Adrenal gland (tissue), 19 donors: ENCODE measurements at regions of chr10 and their contacts with region 1.

Region 1: DNA sequence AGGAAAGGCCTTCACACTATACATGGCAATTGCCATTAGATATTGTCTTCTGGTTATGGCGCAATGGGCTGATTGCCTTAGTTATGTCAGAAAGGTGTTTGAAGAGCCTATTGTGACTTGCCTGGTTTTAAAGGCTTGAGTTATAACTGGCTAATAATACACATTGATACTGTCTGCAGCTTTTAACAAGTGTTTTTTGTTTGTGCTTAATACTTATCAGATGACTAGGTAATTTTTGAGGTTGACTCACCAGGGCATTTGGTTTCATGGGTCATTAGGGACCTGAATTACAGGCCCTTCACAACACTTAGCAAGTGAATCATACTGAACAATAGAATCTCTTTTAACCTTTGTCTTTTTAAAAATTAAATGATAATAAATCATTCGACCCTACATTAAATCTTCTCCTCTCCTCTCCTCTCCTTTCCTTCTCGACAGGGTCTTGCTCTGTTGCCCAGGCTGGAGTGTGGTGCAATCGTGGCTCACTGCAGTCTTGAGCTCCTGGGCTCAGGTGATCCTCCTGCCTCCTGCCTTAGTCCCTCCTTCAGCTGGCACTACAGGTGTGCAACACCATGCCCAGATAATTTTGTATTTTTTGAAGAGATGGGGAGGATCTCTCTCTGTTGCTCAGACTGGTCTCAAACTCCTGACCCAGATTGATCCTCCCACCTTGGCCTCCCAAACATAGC is 196.3 kb downstream of the JCAD start:
- DNase-seq: no peak
- H3K4me3 ChIP-seq: no peak overlapping the region
- H3K27ac ChIP-seq: no peak overlapping the region
- H3K4me1 ChIP-seq: peaks cover 0 to 3% of the 10 kb centered on the region in 2 donors
- H3K27me3 ChIP-seq: no peaks in the 10 kb centered on the region
- CTCF ChIP-seq: no peak
- POLR2A ChIP-seq: no peak

Region 2: DNA sequence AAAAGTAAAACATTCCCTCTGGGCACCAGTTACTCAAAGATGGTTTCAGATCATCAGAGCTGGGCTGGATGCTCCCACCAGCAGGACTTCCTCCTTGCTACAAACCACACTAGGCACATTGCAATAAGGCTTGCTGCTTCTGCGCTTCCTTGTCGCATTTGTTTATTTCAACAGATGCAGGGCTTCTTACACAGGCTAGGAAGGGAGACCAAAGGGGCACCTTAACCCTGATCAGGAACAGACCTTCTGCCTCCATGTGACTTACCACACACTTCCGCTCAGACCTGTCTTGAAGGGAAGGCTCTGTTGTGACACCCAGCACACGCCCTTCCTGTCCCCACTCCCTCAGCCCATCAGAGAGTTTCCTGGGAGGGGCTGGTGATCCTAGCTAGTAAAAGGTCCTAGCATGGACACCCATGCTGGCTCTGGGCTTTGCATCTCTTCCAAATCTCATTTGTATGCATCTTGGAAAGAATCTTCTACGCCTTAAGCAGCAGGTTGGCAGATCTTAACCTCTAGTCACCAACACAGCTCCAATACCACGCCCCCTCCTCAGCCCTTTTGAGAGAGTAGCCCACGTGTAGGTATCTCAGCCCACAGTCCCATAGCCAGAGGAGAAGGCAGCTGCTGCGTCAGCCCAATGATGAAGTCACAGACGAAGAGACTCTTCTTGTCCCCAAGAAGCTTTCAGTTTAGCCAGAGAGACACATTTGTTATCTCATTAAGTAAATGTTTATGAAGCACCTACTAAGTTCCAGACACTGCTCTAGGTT is 181.2 kb before region 1 on chr10:
- intact Hi-C with region 1: no loop called
- DNase-seq: peak in 1 of 7 donors; percentile 33
- H3K4me3 ChIP-seq: no peak overlapping the region
- H3K27ac ChIP-seq: no peak overlapping the region
- H3K4me1 ChIP-seq: no peaks in the 10 kb centered on the region
- H3K27me3 ChIP-seq: no peaks in the 10 kb centered on the region
- CTCF ChIP-seq: no peak
- POLR2A ChIP-seq: no peak

Region 3: DNA sequence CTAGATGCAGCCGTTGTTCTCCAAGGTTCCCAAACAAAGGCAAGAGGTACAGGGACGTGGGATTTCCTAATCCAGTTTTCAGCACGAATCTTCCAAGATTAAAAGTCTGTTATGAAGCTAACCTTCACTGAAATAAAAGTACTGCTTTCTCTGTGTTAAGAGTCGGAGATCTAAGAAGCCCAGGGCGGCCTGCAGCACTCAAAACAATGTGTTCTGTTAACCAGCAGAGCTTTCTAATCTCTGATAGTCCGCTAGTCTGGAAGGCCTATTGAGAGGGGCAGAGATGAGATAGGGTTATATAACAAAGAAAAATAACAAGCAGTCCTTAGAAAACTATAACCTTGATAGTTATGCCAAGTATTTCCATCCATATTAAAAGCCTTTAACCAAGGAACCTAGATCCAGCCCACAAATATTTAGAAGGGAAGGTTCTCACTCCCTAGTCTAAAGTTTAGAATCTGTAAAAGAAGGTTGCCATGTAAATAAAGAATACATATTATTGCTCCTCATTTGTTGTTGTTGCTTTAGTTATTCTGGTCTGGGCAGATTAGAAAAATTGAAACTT is 122.0 kb before region 1 on chr10:
- intact Hi-C with region 1: loop called (anchors 5 to 10 kb)
- DNase-seq: no peak
- H3K4me3 ChIP-seq: no peak overlapping the region
- H3K27ac ChIP-seq: peak overlapping the region in 2 of 5 donors; percentile 20 to 52
- H3K4me1 ChIP-seq: peaks cover 4 to 18% of the 10 kb centered on the region in 2 donors
- H3K27me3 ChIP-seq: peaks cover 2% of the 10 kb centered on the region
- CTCF ChIP-seq: no peak
- POLR2A ChIP-seq: no peak